Posterior cingulate gyrus (tissue), 11 donors: ENCODE measurements at regions of chr1 and their contacts with region 1.

Region 1: DNA sequence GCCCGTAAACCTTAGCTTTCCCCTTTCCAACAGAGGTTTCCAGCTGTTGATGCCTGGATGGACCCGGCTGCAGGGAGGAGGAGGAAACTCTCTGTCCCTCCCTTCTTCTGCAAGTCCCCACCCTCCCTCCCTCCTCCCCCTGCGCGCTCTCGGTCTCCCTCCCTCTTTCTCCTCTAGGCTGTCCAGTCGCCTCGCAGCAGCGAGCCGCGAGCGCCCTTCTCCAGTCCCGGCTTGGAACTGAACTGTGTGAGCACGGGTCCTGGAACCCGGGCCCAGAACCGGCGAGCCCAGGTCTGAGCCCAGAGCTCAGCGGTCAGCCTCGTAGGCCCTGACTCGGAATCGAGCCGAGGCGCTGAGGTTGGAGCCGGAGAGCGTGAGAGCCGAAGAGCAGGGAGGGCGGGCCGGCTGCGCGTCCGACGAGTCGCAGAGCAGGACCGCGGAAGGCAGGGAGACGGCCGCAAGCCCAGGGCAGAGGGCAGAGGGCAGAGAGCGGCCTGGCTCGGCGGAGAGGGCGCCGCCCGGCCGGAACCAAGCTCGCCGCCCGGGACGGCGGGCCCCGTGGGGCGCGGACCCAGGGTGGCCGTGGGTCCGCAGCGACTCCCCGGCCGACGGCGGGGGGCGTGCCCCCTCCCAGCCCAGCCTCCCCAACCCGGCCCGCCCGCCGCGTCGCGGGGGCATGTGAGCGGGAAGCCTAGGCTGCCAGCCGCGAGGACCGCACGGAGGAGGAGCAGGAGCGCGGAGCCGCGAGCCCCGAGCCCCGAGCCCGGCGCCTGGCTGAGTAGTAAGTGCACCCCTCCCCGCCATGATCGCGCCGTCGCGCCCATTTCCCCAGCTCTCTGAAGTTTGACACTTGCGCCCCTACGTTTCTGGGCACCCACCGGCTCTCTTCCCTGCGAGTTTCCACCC is at the start of gene SOX13:
- DNase-seq: peak; percentile 79 to 98 (median 86)

Region 2: DNA sequence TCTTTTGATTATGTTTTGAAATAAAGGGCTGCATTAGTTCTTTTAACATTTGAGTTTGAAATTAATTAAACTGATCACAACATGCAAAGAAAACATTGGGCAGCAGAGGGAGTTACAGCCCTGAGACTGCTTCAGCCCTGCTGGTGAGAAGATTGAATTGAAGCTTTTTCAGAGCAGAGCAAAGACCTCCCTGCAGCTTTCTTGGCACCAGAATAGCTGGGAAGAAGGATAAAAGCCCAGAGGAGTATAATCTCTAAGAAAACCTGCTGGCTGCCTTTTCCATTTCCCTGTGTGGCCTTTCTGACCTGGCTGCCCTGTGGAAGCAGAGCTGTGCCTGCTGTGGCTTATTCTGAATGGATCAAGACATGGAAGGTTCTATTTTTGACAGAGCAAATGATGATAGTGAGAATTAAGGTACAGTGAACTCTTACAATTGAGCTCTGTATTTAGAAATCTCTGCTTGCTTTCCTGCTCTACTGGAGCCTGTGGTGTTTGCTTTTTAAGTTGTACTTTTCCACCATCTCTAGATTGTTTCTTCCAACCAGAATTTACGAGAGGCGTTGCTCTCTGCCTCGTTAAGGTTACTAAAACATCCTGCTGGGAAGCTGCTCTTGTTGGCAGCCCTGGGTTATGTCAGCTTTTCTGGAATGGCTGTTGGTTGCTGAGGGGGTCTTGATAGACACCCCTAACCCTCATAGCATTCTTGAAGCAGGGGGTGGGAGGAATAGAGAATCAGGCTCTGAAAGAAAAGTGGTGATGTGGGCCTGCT is 201.9 kb before region 1 on chr1:
- intact Hi-C with region 1: loop called (anchors 1 kb)
- DNase-seq: peak in 5 of 10 donors; percentile 17 to 85 (median 52)

Region 3: DNA sequence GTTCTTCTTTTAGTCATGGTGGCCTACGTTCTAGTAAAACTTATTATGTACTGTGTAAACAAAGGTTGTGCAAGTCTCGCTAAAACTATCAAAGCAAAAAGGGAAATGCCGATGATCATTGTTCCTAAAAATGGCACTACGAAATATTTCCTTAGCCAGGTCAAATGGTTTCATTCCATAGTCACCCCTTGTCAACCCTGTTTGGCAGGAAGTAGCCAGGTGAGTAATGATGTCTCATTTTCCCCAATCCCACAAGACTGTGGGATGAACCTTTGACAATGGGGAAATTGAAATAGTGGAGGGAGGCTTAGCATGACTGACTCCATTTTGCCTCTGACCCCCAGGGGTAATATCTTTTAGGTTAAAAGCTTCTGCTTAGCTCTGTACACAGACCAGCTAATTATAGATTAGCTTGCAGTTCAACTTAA is 98.6 kb after region 1 on chr1:
- intact Hi-C with region 1: no loop called
- DNase-seq: no peak